ENCODE measurements at regions of chr12 and their contacts with region 1.

Region 1: GRCh38 chr12:122078141-122079032 is at the start of gene MLXIP:
- H3K4me3 ChIP-seq: peak within 1 kb of the TSS; percentile 74
- H3K27ac ChIP-seq: peak within 1 kb of the TSS; percentile 85; the same call in 1 of the 2 replicates
- H3K4me1 ChIP-seq: peaks cover 16% of the 10 kb centered on the region
- CTCF ChIP-seq: no peak

Region 2: DNA sequence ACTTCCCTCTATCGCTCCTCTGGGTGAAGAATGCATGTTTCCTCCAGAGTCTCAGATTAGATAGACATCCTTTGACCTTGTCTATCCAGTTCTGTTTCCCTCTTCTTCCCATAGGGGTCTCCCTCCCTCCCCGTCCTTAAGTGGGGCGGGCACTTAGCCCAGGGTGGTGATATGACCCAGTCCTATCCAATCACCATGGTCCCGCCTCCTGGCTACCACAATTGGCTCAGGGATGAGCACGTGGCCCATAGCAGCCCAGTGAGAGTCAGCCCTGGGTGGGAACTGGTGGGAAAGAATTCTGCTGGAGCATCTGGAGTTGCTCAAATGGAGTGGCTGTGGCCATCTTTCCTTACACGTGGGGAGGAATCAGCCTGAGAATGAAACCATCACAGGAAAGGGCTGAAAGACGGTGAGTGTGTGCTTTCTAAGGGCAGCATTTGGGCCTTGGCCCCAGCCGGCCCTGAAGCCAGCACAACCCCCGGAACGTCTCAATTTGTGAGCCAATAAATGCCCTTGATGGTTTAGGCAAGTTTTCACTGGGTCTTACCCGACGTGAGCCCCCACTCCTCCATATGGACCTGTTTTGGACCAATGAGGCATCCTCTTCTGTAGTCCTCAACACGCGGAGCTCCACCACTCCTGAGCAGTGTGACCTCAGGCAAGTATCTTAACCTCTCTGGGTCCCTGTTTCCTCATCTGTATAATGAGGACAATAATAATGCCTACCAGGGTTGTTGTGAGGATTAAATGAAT is 14.2 kb before region 1 on chr12:
- CTCF ChIA-PET with region 1: interaction called, 11 read pairs
- POLR2A ChIA-PET with region 1: interaction called, 32 read pairs
- H3K4me3 ChIP-seq: no peak overlapping the region
- H3K27ac ChIP-seq: peak overlapping the region; percentile 89; the same call in 1 of the 2 replicates
- H3K4me1 ChIP-seq: peaks cover 22% of the 10 kb centered on the region
- CTCF ChIP-seq: peak; percentile 78

Region 3: GRCh38 chr12:122097927-122098756 is 19.8 kb after region 1 on chr12:
- CTCF ChIA-PET with region 1: no interaction called
- POLR2A ChIA-PET with region 1: interaction called, 12 read pairs
- H3K4me3 ChIP-seq: no peak overlapping the region
- H3K27ac ChIP-seq: peak overlapping the region; percentile 37
- H3K4me1 ChIP-seq: peaks cover 27% of the 10 kb centered on the region
- CTCF ChIP-seq: no peak